ENCODE measurements at regions of chr11 and their contacts with region 1.

Region 1: DNA sequence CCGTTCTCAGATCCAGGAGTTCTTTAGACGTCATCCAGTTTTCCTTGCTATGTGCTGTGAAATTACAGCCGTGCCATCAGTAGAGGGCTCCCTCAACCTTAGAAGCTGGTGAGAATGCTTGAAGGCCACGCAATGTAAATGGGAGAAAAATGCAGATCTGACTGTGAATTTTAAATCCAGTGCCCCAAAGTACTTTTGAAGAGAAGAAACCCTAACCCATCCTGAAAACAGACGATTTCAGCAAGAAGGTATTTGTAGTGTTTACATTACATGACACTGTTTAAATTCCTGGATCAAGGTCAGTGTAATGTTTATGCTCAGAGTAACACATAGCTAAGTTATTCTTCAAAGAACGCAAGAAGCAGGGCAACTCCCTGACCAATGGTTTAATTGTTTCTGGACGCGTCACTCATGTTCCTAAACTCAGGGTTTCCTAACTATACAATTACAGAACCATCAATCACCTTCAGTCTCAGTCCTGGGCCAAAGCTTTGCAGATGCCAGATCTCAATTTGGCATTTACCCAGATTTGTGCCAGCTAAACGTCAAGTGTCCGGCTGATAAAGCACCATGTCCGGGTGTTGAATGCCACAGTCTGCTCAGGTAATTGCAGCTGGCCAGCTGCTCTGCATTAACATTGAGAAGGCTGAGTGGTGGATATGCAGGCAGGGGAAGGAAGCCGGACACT is 38.2 kb downstream of the ADAMTS8 start:
- DNase-seq: no peak
- H3K4me3 ChIP-seq: no peak overlapping the region
- H3K27ac ChIP-seq: no peak overlapping the region
- H3K4me1 ChIP-seq: peaks cover 6 to 8% of the 10 kb centered on the region in 2 donors
- H3K27me3 ChIP-seq: no peaks in the 10 kb centered on the region
- CTCF ChIP-seq: peak; percentile 33 to 67 (median 52)

Region 2: DNA sequence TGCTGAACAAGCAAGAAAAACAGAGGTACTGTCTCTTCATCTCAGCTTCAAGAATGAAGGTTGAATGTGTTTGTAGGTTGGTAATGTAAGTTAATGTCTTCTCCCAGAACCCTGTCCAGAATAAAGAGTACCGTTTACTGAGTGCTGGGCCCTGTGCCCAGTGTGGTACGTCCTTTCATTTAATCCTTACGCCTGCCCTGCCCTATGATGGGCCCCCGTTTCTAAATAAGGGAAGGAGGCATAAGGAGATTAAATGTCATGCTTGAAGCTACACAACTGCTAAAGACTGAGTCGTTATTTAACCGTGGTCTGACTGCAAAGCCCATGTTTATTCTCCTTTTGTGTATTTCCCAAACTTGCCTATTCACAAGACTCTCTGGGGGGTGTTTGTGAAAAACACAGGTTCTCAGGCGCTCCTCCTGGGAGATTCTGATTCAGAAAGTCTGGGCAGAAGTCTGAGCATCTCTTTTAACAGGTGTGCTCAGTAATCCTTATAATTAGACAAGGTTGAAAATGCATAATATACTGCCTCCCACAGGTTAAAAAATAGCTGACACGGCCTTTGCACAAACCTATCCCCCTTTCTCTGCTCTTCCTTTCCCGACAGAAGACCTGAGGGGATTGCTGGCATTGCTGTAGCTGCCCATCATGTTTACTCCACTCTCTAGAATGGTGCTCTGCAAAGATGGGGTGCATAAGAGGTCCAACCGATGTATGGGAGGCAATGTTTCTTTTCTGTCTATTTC is 19.2 kb before region 1 on chr11:
- intact Hi-C with region 1: no loop called
- DNase-seq: no peak
- H3K4me3 ChIP-seq: no peak overlapping the region
- H3K27ac ChIP-seq: no peak overlapping the region
- H3K4me1 ChIP-seq: no peaks in the 10 kb centered on the region
- H3K27me3 ChIP-seq: no peaks in the 10 kb centered on the region
- CTCF ChIP-seq: no peak

Region 3: GRCh38 chr11:130427581-130428315 is 37.5 kb after region 1 on chr11:
- intact Hi-C with region 1: loop called (anchors 1 kb)
- DNase-seq: no peak
- H3K4me3 ChIP-seq: peak overlapping the region; percentile 51 to 83
- H3K27ac ChIP-seq: peak overlapping the region in 1 of 2 donors; percentile 64
- H3K4me1 ChIP-seq: peaks cover 3 to 17% of the 10 kb centered on the region in 2 donors
- H3K27me3 ChIP-seq: no peaks in the 10 kb centered on the region
- CTCF ChIP-seq: peak in 1 of 3 experiments; percentile 45

Measured in ascending aorta (tissue), 2 donors.